ENCODE measurements at regions of chr15 and their contacts with region 1.

Region 1: DNA sequence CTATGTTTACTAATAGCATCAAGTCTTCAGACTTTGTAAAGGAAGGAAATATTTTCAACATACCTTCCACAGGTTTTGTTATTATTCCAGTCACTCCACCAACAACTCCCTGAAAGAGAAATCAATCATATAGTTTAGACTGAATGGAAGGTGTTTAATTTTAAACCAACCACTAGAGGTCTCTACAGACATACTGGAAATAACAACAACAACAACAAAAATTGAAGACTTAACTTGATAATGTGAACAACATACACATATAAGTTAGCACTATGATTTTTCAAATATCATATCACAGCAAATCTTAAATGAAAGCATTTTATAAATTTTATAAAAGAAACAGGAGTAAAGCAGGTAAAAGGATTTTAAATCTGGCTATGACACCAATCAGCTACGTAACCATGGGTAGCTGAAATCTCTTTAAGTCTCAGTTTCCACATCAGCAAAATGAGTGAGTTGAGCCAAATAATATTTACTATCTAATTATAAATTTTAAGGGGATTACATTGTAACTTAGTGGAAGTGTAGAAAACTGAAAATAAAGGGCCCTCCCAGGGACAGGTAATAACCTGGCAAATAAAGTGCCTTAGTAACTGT is 188.2 kb downstream of the VPS13C start:
- DNase-seq: no peak
- H3K4me3 Mint-ChIP-seq: no peak overlapping the region
- H3K27ac Mint-ChIP-seq: no peak overlapping the region
- H3K4me1 Mint-ChIP-seq: no peaks in the 10 kb centered on the region
- H3K27me3 Mint-ChIP-seq: no peaks in the 10 kb centered on the region

Region 2: GRCh38 chr15:61720197-61720596 is 151.8 kb before region 1 on chr15:
- intact Hi-C with region 1: no loop called
- DNase-seq: no peak
- H3K4me3 Mint-ChIP-seq: no peak overlapping the region
- H3K27ac Mint-ChIP-seq: no peak overlapping the region
- H3K4me1 Mint-ChIP-seq: no peaks in the 10 kb centered on the region
- H3K27me3 Mint-ChIP-seq: peaks cover 6% of the 10 kb centered on the region

Region 3: GRCh38 chr15:62066663-62067447 is 194.8 kb after region 1 on chr15 and contains the start of gene C2CD4A:
- intact Hi-C with region 1: loop called (anchors 1 kb)
- DNase-seq: peak; percentile 84
- H3K4me3 Mint-ChIP-seq: peak within 1 kb of the TSS; percentile 78
- H3K27ac Mint-ChIP-seq: peak within 1 kb of the TSS; percentile 14
- H3K4me1 Mint-ChIP-seq: peaks cover 21% of the 10 kb centered on the region
- H3K27me3 Mint-ChIP-seq: peaks cover 54% of the 10 kb centered on the region
- total RNA-seq, gene C2CD4A: 0.05 and 0.24 TPM in 2 replicates

Region 4: GRCh38 chr15:62306851-62307504 is 435.0 kb after region 1 on chr15:
- intact Hi-C with region 1: loop called (anchors 5 kb)
- DNase-seq: peak; percentile 61
- H3K4me3 Mint-ChIP-seq: no peak overlapping the region
- H3K27ac Mint-ChIP-seq: no peak overlapping the region
- H3K4me1 Mint-ChIP-seq: peaks cover 6% of the 10 kb centered on the region
- H3K27me3 Mint-ChIP-seq: peaks cover 36% of the 10 kb centered on the region

Measured in activated CD4-positive, alpha-beta T cell treated with anti-CD3 and anti-CD28 coated beads, Interleukin-2, amount 10 ng/mL, durations not matched to agents 24 days and 14 days (primary cell).